Transverse colon (tissue), 4 donors: ENCODE measurements at regions of chr6 and their contacts with region 1.

Region 1: GRCh38 chr6:46234156-46234556 is 63.4 kb upstream of the ENPP5 start:
- DNase-seq: no peak
- H3K4me3 ChIP-seq: no peak overlapping the region
- H3K27ac ChIP-seq: no peak overlapping the region
- H3K4me1 ChIP-seq: no peaks in the 10 kb centered on the region
- H3K27me3 ChIP-seq: no peaks in the 10 kb centered on the region
- CTCF ChIP-seq: no peak
- EP300 ChIP-seq: no peak
- POLR2A ChIP-seq: no peak

Region 2: GRCh38 chr6:46465294-46466165 is 231.4 kb after region 1 on chr6:
- in situ Hi-C with region 1: no loop called
- intact Hi-C with region 1: no loop called
- DNase-seq: no peak
- H3K4me3 ChIP-seq: no peak overlapping the region
- H3K27ac ChIP-seq: no peak overlapping the region
- H3K4me1 ChIP-seq: peaks cover 0 to 5% (median 0%) of the 10 kb centered on the region in 4 donors
- H3K27me3 ChIP-seq: no peaks in the 10 kb centered on the region
- CTCF ChIP-seq: no peak
- EP300 ChIP-seq: no peak
- POLR2A ChIP-seq: no peak

Region 3: GRCh38 chr6:46606338-46606737 is 372.2 kb after region 1 on chr6:
- in situ Hi-C with region 1: loop called in 1 of 4 experiments (anchors 25 kb)
- intact Hi-C with region 1: no loop called
- DNase-seq: no peak
- H3K4me3 ChIP-seq: no peak overlapping the region
- H3K27ac ChIP-seq: no peak overlapping the region
- H3K4me1 ChIP-seq: no peaks in the 10 kb centered on the region
- H3K27me3 ChIP-seq: no peaks in the 10 kb centered on the region
- CTCF ChIP-seq: no peak
- EP300 ChIP-seq: no peak
- POLR2A ChIP-seq: no peak

Region 4: GRCh38 chr6:47651505-47651944 is 1417.4 kb after region 1 on chr6:
- in situ Hi-C with region 1: no loop called
- intact Hi-C with region 1: no loop called
- DNase-seq: no peak
- H3K4me3 ChIP-seq: no peak overlapping the region
- H3K27ac ChIP-seq: no peak overlapping the region
- H3K4me1 ChIP-seq: peaks cover 3 to 28% (median 16%) of the 10 kb centered on the region in 4 donors
- H3K27me3 ChIP-seq: no peaks in the 10 kb centered on the region
- CTCF ChIP-seq: no peak
- EP300 ChIP-seq: no peak
- POLR2A ChIP-seq: no peak